Activated B cell treated with CpG ODN at 0.5 μM for 24 hours (primary cell): ENCODE measurements at regions of chr12 and their contacts with region 1.

Region 1: GRCh38 chr12:89019408-89020120 is 332.7 kb downstream of the DUSP6 start:
- DNase-seq: peak; percentile 25
- ATAC-seq: peak; percentile 99
- H3K4me3 Mint-ChIP-seq: no peak overlapping the region
- H3K27ac Mint-ChIP-seq: no peak overlapping the region
- H3K4me1 Mint-ChIP-seq: peaks cover 4% of the 10 kb centered on the region
- H3K27me3 Mint-ChIP-seq: peaks cover 4% of the 10 kb centered on the region
- CTCF ChIP-seq: peak; percentile 41

Region 2: GRCh38 chr12:88753066-88753465 is 266.5 kb before region 1 on chr12:
- CTCF ChIA-PET with region 1: no interaction called
- POLR2A ChIA-PET with region 1: no interaction called
- intact Hi-C with region 1: no loop called
- DNase-seq: no peak
- ATAC-seq: no peak
- H3K4me3 Mint-ChIP-seq: no peak overlapping the region
- H3K27ac Mint-ChIP-seq: no peak overlapping the region
- H3K4me1 Mint-ChIP-seq: no peaks in the 10 kb centered on the region
- H3K27me3 Mint-ChIP-seq: no peaks in the 10 kb centered on the region
- CTCF ChIP-seq: no peak

Region 3: DNA sequence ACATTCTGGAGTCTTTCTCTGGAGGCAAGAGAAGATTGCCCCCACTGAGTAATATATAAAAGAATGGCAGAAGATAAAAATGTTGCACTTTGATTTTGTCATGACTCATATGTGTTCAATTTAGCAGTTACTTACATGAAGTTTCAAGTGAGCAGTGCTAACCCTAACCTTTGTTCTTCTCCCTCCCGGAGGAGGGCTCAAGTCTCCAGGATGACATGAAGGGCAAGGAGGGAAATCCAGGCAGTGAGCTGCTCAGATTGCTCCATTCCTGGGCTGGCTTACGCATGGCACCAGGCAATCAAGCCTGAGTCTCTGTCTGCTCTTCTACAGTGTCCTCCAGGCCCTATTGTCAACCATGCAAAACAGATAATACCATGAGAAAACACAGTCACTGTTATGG is 10.4 kb after region 1 on chr12:
- CTCF ChIA-PET with region 1: no interaction called
- POLR2A ChIA-PET with region 1: no interaction called
- intact Hi-C with region 1: no loop called
- DNase-seq: no peak
- ATAC-seq: no peak
- H3K4me3 Mint-ChIP-seq: no peak overlapping the region
- H3K27ac Mint-ChIP-seq: no peak overlapping the region
- H3K4me1 Mint-ChIP-seq: no peaks in the 10 kb centered on the region
- H3K27me3 Mint-ChIP-seq: peaks cover 5% of the 10 kb centered on the region
- CTCF ChIP-seq: no peak

Region 4: GRCh38 chr12:89040146-89040964 is 20.8 kb after region 1 on chr12:
- CTCF ChIA-PET with region 1: interaction called, 6 read pairs
- POLR2A ChIA-PET with region 1: no interaction called
- intact Hi-C with region 1: loop called (anchors 2 kb)
- DNase-seq: no peak
- ATAC-seq: peak; percentile 75
- H3K4me3 Mint-ChIP-seq: no peak overlapping the region
- H3K27ac Mint-ChIP-seq: peak overlapping the region; percentile 14
- H3K4me1 Mint-ChIP-seq: peaks cover 17% of the 10 kb centered on the region
- H3K27me3 Mint-ChIP-seq: no peaks in the 10 kb centered on the region
- CTCF ChIP-seq: no peak

Region 5: DNA sequence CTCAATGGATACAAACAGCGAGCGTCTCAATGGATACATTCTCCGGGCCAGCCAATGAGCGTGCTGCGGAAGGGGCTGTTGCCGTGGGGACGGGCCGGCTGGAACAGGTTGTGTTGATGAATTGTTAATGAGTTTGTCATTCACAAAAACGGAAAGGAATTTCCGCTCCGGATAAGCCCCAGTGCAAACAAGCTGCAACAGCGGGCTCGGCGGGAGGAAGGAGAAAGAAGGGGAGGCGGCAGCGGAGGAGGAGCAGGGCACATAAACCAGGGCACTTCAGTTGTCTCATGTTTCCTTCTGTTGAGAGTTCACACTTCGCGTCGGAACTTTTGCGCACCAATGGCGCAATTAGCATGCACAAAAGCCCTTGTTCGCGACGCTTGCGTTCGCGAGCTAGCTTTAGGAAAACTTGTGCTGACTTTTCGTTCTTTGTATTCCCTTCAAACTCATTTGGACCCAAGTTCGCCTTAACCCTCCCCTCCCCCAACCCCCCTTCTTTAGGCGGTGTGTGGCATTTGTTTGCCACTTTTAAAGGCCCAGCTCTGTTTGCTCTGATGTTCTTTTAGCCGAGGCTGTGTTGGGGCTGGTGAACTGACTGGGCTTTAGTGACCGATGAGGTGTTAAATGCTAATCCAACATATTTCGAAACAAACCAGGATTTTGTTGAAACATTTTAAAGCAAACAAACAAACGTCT is 333.1 kb after region 1 on chr12 and contains the start of gene DUSP6:
- CTCF ChIA-PET with region 1: no interaction called
- POLR2A ChIA-PET with region 1: no interaction called
- intact Hi-C with region 1: loop called (anchors 2 kb)
- DNase-seq: peak; percentile 62
- ATAC-seq: peak; percentile 61
- H3K4me3 Mint-ChIP-seq: peak within 1 kb of the TSS; percentile 84
- H3K27ac Mint-ChIP-seq: peak within 1 kb of the TSS; percentile 82
- H3K4me1 Mint-ChIP-seq: peaks cover 62% of the 10 kb centered on the region
- H3K27me3 Mint-ChIP-seq: no peaks in the 10 kb centered on the region
- CTCF ChIP-seq: no peak
- total RNA-seq, gene DUSP6: 1.6 and 1.8 TPM in 2 replicates

Region 6: DNA sequence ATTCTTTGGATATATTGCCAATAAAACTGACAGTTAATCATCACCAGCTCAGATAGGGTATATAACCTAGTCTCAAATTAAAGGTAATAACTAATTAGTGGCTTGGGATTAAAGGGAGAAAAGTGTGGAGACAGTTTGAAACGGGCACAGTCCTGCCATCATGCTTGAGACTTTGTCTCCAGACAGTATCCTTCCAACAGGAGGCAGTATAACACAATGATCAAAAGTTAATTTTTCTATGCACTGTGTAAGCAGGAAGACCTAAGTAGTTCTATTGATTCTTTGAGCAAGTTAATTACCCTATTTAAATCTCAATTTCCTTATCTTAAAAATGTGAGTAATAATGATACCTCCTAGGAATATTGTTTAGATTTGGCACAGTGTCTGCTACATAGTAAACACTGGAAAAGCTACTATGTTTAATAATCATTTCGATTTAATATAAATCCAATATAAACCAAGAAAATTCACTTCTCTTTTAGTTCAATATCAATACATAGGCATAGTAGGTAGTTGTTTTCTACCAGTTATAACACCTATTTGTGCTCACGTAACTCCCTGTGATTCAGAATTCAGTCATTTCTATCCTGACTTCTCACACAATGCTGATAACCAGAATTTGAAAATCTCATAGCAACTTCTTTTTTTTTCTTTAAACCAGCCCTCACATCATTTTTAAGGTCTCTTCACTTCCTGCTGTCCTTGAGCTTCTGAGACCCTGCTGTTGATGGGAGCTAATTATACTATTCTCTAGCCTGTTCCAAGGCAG is 451.4 kb after region 1 on chr12:
- CTCF ChIA-PET with region 1: interaction called, 40 read pairs
- POLR2A ChIA-PET with region 1: no interaction called
- intact Hi-C with region 1: no loop called
- DNase-seq: no peak
- ATAC-seq: peak; percentile 70
- H3K4me3 Mint-ChIP-seq: no peak overlapping the region
- H3K27ac Mint-ChIP-seq: no peak overlapping the region
- H3K4me1 Mint-ChIP-seq: peaks cover 49% of the 10 kb centered on the region
- H3K27me3 Mint-ChIP-seq: no peaks in the 10 kb centered on the region
- CTCF ChIP-seq: no peak

Region 7: GRCh38 chr12:89529738-89530137 is 510.2 kb after region 1 on chr12:
- CTCF ChIA-PET with region 1: interaction called, 20 read pairs
- POLR2A ChIA-PET with region 1: interaction called, 3 read pairs
- intact Hi-C with region 1: loop called (anchors 1 kb)
- DNase-seq: no peak
- ATAC-seq: peak; percentile 18
- H3K4me3 Mint-ChIP-seq: no peak overlapping the region
- H3K27ac Mint-ChIP-seq: peak overlapping the region; percentile 9
- H3K4me1 Mint-ChIP-seq: peaks cover 21% of the 10 kb centered on the region
- H3K27me3 Mint-ChIP-seq: no peaks in the 10 kb centered on the region
- CTCF ChIP-seq: peak; percentile 15

Region 8: GRCh38 chr12:90940872-90941499 is 1921.4 kb after region 1 on chr12:
- CTCF ChIA-PET with region 1: no interaction called
- POLR2A ChIA-PET with region 1: no interaction called
- intact Hi-C with region 1: loop called (anchors 1 kb)
- DNase-seq: no peak
- ATAC-seq: peak; percentile 28
- H3K4me3 Mint-ChIP-seq: no peak overlapping the region
- H3K27ac Mint-ChIP-seq: no peak overlapping the region
- H3K4me1 Mint-ChIP-seq: no peaks in the 10 kb centered on the region
- H3K27me3 Mint-ChIP-seq: peaks cover 12% of the 10 kb centered on the region
- CTCF ChIP-seq: peak; percentile 36